H1 (cell line): ENCODE measurements at regions of chr15 and their contacts with region 1.

Region 1: GRCh38 chr15:93997084-93997918 is 234.1 kb upstream of the MCTP2 start:
- DNase-seq: no peak
- H3K4me3 ChIP-seq: no peak overlapping the region
- H3K27ac ChIP-seq: no peak overlapping the region
- H3K4me1 ChIP-seq: no peaks in the 10 kb centered on the region
- H3K27me3 ChIP-seq: no peaks in the 10 kb centered on the region
- CTCF ChIP-seq: peak in 2 of 3 experiments; percentile 55 to 64; a peak in 2 of 4 replicates
- EP300 ChIP-seq: no peak
- POLR2A ChIP-seq: no peak
- RAD21 ChIP-seq: peak; percentile 61 to 66

Region 2: DNA sequence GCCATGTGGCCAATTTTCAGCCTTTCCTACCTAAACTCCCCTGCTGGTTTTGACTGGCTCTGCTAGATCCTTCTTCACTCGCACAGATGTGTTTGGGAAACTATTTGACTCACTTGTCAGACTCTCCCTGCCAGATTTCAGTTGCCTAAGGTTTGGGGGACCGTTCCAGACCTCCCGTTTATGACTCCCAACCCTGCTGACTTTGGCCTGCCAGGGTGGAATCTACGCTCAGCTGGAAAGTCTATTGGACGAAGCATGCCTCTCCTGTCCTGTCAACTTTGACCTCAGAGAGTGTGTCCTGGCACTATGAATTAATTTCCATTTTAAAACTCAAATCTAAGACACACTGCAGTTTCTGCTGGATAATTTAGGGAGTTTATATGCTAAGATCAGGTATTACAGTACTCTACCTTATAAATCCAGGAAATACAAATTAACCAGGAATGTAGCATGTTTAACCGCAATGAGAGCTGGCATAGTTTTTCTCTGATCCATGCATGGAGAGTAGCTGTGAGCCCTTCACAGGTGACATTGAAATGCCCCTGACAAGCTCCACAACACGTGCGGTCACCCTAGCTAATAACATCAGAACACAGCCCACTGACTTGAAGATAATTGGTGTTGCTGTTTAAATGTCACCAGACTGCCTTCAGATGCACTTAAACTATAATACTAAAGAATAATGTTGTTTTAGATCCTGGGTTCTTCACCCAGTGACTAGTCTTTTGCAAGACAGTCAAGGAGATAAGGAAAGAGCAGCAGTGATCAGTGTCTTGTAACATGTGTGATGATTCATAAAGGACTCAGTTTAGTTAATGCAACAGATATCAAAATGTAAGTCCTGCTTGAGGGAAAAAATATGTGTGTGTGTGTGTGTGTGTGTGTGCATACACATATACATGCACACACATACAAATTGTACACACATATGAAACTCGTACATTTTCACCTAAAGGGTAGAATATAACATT is 11.1 kb after region 1 on chr15:
- CTCF ChIA-PET with region 1: interaction called, 22 read pairs
- POLR2A ChIA-PET with region 1: no interaction called
- DNase-seq: no peak
- H3K4me3 ChIP-seq: no peak overlapping the region
- H3K27ac ChIP-seq: no peak overlapping the region
- H3K4me1 ChIP-seq: no peaks in the 10 kb centered on the region
- H3K27me3 ChIP-seq: no peaks in the 10 kb centered on the region
- CTCF ChIP-seq: no peak
- EP300 ChIP-seq: no peak
- POLR2A ChIP-seq: no peak
- RAD21 ChIP-seq: no peak